Left ventricle myocardium superior (tissue), 1 donor: ENCODE measurements at regions of chr1 and their contacts with region 1.

Region 1: GRCh38 chr1:12320516-12320915 is 90.7 kb downstream of the VPS13D start:
- DNase-seq: no peak
- ATAC-seq: no peak

Region 2: DNA sequence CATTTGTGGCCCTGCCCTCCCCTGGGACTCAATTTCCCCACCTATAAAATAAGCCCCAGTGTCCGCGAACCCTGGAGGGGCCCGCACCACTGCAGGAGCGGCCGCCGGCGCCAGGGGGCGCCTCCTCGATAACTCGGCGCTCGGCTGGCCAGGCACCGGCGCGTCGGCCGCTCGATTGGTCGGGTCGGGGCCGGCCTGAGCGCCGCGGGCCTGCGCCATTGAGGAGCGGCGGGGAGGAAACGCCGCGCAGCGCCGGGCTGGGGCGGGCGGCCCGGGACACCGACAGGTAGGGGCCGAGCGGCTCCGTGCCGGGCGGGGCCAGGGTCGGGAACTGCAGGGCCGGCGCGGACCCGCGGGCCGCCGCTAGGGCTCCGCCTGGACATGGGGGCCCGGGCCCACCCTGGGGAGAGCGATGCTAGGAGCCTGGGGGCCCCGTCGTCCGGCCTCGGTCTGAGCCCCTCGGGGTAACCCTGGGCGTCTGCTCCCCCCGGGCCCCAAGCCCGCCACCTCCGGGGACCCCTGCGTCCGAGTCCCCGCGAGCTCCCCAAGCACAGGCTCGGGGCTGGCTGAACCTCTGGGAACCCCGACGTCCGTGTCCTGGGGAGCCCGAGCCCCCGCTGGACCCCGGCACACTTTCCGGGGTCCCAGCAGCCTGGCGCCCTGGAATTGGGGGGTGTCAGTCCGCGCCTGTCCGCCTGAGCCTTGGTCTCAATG is 90.5 kb before region 1 on chr1 and contains the start of gene VPS13D:
- intact Hi-C with region 1: no loop called
- DNase-seq: peak; percentile 94
- ATAC-seq: peak; percentile 84
- total RNA-seq, gene VPS13D: 112 TPM

Region 3: DNA sequence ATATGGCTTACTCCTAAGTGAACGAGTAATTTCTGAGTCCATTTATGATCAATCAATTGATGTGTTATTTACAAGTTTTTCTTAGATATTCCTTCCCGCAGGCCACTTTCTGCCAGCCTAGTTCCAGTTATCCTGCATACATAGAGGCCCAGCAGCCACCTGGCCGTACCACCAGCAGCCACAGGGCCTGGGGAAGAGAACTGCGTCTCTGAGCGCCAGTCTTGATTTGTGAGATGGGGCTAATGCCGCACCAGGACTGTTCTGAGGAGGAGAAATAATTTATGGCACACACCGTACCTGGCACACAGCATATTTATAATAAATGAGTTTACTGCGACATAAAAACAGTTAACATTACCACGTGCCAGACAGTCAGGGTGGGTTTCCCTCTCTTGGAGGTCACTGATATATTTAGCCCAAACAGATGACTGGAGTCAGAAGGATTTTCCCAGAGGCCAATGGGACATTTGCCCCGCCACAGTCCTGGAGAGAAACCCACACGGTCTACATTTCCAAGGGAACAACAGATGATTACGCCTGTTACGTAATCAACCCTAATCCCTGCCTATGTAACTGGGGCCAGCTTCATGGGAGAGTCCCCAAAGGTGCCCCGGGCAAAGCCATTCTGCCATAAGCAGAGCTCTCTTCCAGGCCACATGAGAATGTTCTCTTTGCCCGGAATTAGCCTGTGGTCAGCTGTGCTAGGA is 259.4 kb after region 1 on chr1:
- intact Hi-C with region 1: loop called (anchors 5 kb)
- DNase-seq: peak; percentile 36
- ATAC-seq: peak; percentile 69